Ascending aorta (tissue), 2 donors: ENCODE measurements at regions of chr17 and their contacts with region 1.

Region 1: DNA sequence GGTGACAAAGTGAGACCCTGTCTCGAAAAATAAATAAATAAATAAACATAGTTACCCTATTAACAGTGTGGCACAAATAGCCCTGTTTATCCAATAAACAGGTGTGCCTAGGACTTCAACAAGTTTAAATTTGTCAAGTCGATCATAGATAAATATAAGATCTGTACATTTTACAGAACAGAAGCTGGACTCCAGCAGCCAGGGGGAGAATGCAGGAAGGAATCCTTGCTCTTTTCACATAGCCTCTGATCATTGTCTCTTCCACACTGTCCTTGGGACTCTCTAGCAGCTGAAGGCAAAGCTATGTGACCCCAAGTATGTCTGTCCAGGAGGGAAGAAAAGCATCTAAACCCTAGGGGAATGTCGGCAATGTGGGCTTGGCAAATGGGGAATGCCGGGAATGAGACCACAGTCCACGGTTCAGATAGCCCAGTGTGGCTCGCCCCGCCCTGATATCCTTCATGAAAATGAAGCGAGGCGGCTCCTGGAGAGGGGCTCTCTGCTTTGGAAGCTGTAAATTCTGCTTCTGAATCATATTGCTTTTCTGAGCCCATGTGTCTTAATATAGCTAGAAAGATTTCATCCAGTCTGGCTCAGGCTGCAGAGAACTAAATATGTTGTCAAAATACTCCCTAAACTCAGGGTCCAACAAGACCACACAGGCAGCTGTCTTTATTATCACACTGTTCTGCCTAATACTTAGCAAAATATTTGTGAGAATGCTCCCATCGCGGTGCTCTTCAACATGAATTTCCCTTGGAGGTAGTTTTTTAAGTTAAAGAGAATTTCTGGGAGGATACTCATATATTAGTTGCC is 24.9 kb upstream of the GRB2 start:
- DNase-seq: no peak
- H3K4me3 ChIP-seq: peak overlapping the region in 1 of 2 donors; percentile 6
- H3K27ac ChIP-seq: peak overlapping the region; percentile 84 to 89
- H3K4me1 ChIP-seq: peaks cover 14 to 30% of the 10 kb centered on the region in 2 donors
- H3K27me3 ChIP-seq: no peaks in the 10 kb centered on the region
- CTCF ChIP-seq: no peak

Region 2: GRCh38 chr17:75440738-75441448 is 10.5 kb after region 1 on chr17:
- intact Hi-C with region 1: loop called (anchors 1 kb)
- DNase-seq: no peak
- H3K4me3 ChIP-seq: no peak overlapping the region
- H3K27ac ChIP-seq: peak overlapping the region; percentile 92 to 98
- H3K4me1 ChIP-seq: peaks cover 7 to 34% of the 10 kb centered on the region in 2 donors
- H3K27me3 ChIP-seq: no peaks in the 10 kb centered on the region
- CTCF ChIP-seq: no peak

Region 3: GRCh38 chr17:75456417-75457046 is 26.2 kb after region 1 on chr17 and contains the start of gene TMEM94:
- intact Hi-C with region 1: loop called (anchors 1 kb)
- DNase-seq: peak; percentile 84 to 98
- H3K4me3 ChIP-seq: peak within 1 kb of the TSS; percentile 75 to 80
- H3K27ac ChIP-seq: peak within 1 kb of the TSS; percentile 86 to 89
- H3K4me1 ChIP-seq: peaks cover 0 to 27% of the 10 kb centered on the region in 2 donors
- H3K27me3 ChIP-seq: no peaks in the 10 kb centered on the region
- CTCF ChIP-seq: no peak
- total RNA-seq, gene TMEM94: 125 TPM

Region 4: GRCh38 chr17:75515496-75516254 is 85.3 kb after region 1 on chr17 and contains the start of gene CASKIN2:
- intact Hi-C with region 1: loop called (anchors 1 kb)
- DNase-seq: peak; percentile 77 to 96
- H3K4me3 ChIP-seq: peak within 1 kb of the TSS; percentile 78 to 82
- H3K27ac ChIP-seq: peak within 1 kb of the TSS; percentile 74 to 88
- H3K4me1 ChIP-seq: peaks cover 25 to 41% of the 10 kb centered on the region in 2 donors
- H3K27me3 ChIP-seq: no peaks in the 10 kb centered on the region
- CTCF ChIP-seq: peak; percentile 99 to 100 (median 99)
- total RNA-seq, gene CASKIN2: 112 TPM

Region 5: GRCh38 chr17:75524953-75525719 is 94.8 kb after region 1 on chr17 and contains the start of gene LLGL2:
- intact Hi-C with region 1: loop called (anchors 2 kb)
- DNase-seq: no peak
- H3K4me3 ChIP-seq: peak within 1 kb of the TSS; percentile 71 to 77
- H3K27ac ChIP-seq: peak within 1 kb of the TSS; percentile 57 to 60
- H3K4me1 ChIP-seq: peaks cover 4 to 11% of the 10 kb centered on the region in 2 donors
- H3K27me3 ChIP-seq: no peaks in the 10 kb centered on the region
- CTCF ChIP-seq: peak; percentile 24 to 65 (median 35)
- total RNA-seq, gene LLGL2: 41.8 TPM

Region 6: DNA sequence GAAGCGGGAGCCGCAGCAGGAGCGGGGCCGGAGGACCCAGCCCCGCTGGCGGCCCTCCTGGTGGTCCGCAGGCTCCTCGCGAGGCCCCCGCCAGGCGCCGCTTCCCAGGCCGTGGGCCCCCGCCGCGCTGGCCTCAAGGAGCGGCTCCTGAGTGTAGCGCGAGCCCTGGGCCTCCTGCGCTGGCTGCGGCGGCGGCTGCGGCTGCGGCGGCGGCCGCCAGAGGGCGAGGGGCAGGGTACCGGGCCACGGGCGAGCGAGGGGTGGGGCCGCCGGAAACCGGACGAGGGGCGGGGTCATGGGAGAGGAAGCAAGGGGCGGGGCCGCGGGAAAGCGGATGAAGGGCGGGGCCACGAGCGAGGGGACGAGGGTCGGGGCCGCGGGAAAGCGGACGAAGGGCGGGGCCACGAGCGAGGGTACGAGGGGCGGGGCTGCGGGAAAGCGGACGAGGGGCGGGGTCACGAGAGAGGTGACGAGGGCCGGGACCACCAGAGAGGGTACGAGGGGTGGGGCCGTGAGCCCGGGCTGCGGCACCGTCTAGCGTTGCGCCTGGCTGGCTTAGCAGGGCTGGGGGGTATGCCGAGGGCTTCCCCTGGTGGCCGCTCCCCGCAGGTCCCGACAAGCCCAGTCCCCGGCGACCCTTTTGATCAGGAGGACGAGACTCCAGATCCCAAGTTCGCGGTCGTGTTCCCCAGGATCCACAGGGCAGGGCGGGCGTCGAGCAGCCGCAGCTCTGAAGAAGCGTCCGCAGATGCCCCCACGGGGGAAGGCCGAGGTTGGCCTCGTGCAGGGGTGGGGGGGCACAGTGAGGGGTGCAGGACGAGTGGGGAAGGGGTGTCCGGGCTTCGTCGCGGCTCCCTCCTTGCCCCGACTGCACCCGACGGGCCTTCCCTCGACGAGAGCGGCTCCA is 158.9 kb after region 1 on chr17:
- intact Hi-C with region 1: loop called (anchors 1 kb)
- DNase-seq: peak; percentile 54 to 93
- H3K4me3 ChIP-seq: peak overlapping the region; percentile 71 to 79
- H3K27ac ChIP-seq: peak overlapping the region; percentile 86 to 87
- H3K4me1 ChIP-seq: no peaks in the 10 kb centered on the region
- H3K27me3 ChIP-seq: no peaks in the 10 kb centered on the region
- CTCF ChIP-seq: peak; percentile 46 to 97 (median 53)